AG04450 (cell line): ENCODE measurements at regions of chr17 and their contacts with region 1.

Region 1: GRCh38 chr17:78745407-78746088 is 36.5 kb downstream of the CYTH1 start:
- DNase-seq: no peak
- H3K4me3 ChIP-seq: no peak overlapping the region
- H3K27ac ChIP-seq: no peak overlapping the region
- H3K27me3 ChIP-seq: no peaks in the 10 kb centered on the region
- CTCF ChIP-seq: peak; percentile 55

Region 2: DNA sequence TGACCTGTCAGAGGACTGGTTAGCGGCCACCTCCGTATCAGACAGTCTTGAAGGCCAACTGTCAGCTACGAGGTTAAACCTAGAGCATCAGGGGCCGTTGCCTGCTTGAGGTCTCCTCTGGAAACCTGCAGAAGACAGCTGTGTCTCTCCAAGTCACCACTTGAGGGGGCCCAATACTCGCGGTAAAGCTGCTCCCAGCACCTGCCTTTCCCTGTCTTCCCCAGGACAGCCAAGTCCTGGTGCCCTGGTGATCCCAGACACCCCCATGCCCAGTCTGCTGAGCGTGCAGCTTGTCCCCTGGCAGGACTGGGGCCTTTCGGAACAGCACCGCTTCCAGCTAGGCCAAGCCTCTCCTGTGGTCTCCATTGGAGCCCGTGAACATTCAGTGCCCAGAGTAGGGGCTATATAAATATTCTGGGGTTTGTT is 248.4 kb before region 1 on chr17:
- CTCF ChIA-PET with region 1: interaction called, 12 read pairs
- POLR2A ChIA-PET with region 1: no interaction called
- DNase-seq: peak; percentile 38
- H3K4me3 ChIP-seq: no peak overlapping the region
- H3K27ac ChIP-seq: no peak overlapping the region
- H3K27me3 ChIP-seq: no peaks in the 10 kb centered on the region
- CTCF ChIP-seq: peak; percentile 80